ENCODE measurements at regions of chr2 and their contacts with region 1.

Region 1: GRCh38 chr2:144529841-144530240 is 9.9 kb upstream of the ZEB2 start:
- DNase-seq: peak; percentile 55
- H3K4me3 Mint-ChIP-seq: no peak overlapping the region
- H3K27ac Mint-ChIP-seq: peak overlapping the region; percentile 46
- H3K4me1 Mint-ChIP-seq: peaks cover 13% of the 10 kb centered on the region
- H3K27me3 Mint-ChIP-seq: no peaks in the 10 kb centered on the region
- CTCF ChIP-seq: no peak

Region 2: GRCh38 chr2:144152817-144153271 is 377.0 kb before region 1 on chr2:
- CTCF ChIA-PET with region 1: no interaction called
- POLR2A ChIA-PET with region 1: no interaction called
- intact Hi-C with region 1: no loop called
- DNase-seq: no peak
- H3K4me3 Mint-ChIP-seq: no peak overlapping the region
- H3K27ac Mint-ChIP-seq: no peak overlapping the region
- H3K4me1 Mint-ChIP-seq: peaks cover 5% of the 10 kb centered on the region
- H3K27me3 Mint-ChIP-seq: no peaks in the 10 kb centered on the region
- CTCF ChIP-seq: no peak

Region 3: DNA sequence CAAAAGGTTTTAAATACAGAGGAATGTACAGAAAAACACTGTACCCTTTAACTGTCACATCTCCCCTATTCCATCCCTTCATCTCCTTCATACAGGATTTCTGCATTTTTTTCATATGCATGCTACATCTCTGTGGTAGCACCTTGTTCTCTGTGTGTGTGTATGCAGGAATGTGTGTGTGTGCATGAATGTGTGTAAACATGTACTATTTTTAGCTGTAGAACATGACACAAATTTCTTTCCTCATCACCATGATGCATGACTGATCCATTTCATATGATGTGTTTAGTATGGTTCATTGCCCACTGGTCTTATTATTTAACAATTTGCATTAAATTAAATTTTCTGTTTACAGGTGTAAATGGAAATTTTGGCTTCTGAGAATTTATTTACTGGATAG is 11.6 kb after region 1 on chr2:
- CTCF ChIA-PET with region 1: no interaction called
- POLR2A ChIA-PET with region 1: interaction called, 16 read pairs
- intact Hi-C with region 1: no loop called
- DNase-seq: no peak
- H3K4me3 Mint-ChIP-seq: no peak overlapping the region
- H3K27ac Mint-ChIP-seq: no peak overlapping the region
- H3K4me1 Mint-ChIP-seq: peaks cover 6% of the 10 kb centered on the region
- H3K27me3 Mint-ChIP-seq: no peaks in the 10 kb centered on the region
- CTCF ChIP-seq: no peak

Measured in MCF 10A (cell line).